ENCODE measurements at regions of chr17 and their contacts with region 1.

Region 1: GRCh38 chr17:8137645-8138373 is 13.9 kb upstream of the HES7 start:
- DNase-seq: peak; percentile 23 to 70
- H3K4me3 ChIP-seq: peak overlapping the region in 1 of 2 donors; percentile 22
- H3K27ac ChIP-seq: peak overlapping the region; percentile 81 to 83
- H3K4me1 ChIP-seq: peaks cover 0 to 46% (median 19%) of the 10 kb centered on the region in 4 donors
- H3K27me3 ChIP-seq: no peaks in the 10 kb centered on the region
- CTCF ChIP-seq: no peak

Region 2: GRCh38 chr17:8162233-8162996 is 24.6 kb after region 1 on chr17 and contains the start of gene VAMP2:
- intact Hi-C with region 1: loop called (anchors 2 kb)
- DNase-seq: peak; percentile 73 to 91
- H3K4me3 ChIP-seq: peak within 1 kb of the TSS; percentile 85 to 99
- H3K27ac ChIP-seq: peak within 1 kb of the TSS; percentile 99 to 100
- H3K4me1 ChIP-seq: peaks cover 0 to 63% (median 45%) of the 10 kb centered on the region in 4 donors
- H3K27me3 ChIP-seq: no peaks in the 10 kb centered on the region
- CTCF ChIP-seq: no peak

Region 3: GRCh38 chr17:8222630-8223356 is 85.0 kb after region 1 on chr17:
- intact Hi-C with region 1: no loop called
- DNase-seq: peak; percentile 95 to 98
- H3K4me3 ChIP-seq: peak overlapping the region; percentile 64 to 69
- H3K27ac ChIP-seq: peak overlapping the region; percentile 96 to 99
- H3K4me1 ChIP-seq: peaks cover 0 to 36% (median 16%) of the 10 kb centered on the region in 4 donors
- H3K27me3 ChIP-seq: no peaks in the 10 kb centered on the region
- CTCF ChIP-seq: no peak

Measured in tibial artery (tissue), 4 donors.